IMR-90 (cell line): ENCODE measurements at regions of chr5 and their contacts with region 1.

Region 1: DNA sequence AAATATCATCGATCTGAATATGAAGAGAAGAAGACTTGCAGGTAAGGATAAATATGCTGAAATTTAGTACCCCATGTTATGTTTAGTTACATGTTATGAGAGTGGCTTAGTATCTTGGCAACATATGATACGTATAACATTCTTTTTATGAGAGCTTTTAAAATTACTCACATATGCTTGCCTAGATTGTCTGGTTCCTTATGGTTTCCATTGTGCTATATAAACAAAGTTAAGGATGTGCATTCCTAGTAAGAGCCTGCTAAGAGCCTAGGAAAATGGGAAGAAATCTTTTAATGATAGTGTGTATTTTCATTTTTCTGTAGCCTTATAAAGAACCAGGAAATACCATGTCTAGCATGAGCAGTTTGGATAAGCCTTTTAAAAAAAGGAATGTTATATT is 112.0 kb upstream of the KCNN2 start:
- DNase-seq: peak; percentile 94
- ATAC-seq: peak; percentile 83
- H3K4me3 ChIP-seq: no peak overlapping the region
- H3K27ac ChIP-seq: peak overlapping the region; percentile 95; the same call in 1 of the 2 replicates
- H3K4me1 ChIP-seq: peaks cover 16% of the 10 kb centered on the region
- H3K27me3 ChIP-seq: no peaks in the 10 kb centered on the region
- CTCF ChIP-seq: no peak
- POLR2A ChIP-seq: no peak
- RAD21 ChIP-seq: no peak

Region 2: DNA sequence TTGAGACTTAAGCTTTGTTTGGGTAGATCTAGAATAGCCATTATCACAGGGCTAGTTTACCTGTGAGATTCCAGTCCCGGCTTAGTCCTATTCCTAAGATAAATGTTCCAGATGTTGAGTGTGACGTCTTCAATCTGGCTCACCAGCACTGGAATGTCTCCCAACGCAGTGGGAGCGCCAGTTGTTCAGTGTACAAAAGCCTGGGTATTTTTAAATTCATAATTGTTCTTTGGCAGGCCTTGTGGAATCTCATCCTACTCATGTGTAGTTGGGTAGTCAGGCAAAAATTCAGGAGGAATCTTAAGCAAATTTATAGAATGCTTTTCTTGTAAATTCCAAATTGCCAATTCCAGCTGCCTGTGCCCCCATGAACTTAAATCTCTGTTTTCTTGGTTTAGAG is 160.6 kb before region 1 on chr5:
- CTCF ChIA-PET with region 1: no interaction called
- POLR2A ChIA-PET with region 1: interaction called, 18 read pairs
- dilution Hi-C with region 1: no loop called
- in situ Hi-C with region 1: no loop called
- intact Hi-C with region 1: no loop called
- DNase-seq: no peak
- ATAC-seq: no peak
- H3K4me3 ChIP-seq: no peak overlapping the region
- H3K27ac ChIP-seq: no peak overlapping the region
- H3K4me1 ChIP-seq: no peaks in the 10 kb centered on the region
- H3K27me3 ChIP-seq: no peaks in the 10 kb centered on the region
- CTCF ChIP-seq: no peak
- POLR2A ChIP-seq: no peak
- RAD21 ChIP-seq: no peak

Region 3: GRCh38 chr5:114101153-114101552 is 148.7 kb before region 1 on chr5:
- CTCF ChIA-PET with region 1: no interaction called
- POLR2A ChIA-PET with region 1: interaction called, 9 read pairs
- dilution Hi-C with region 1: no loop called
- in situ Hi-C with region 1: no loop called
- intact Hi-C with region 1: loop called (anchors 5 kb)
- DNase-seq: peak; percentile 80
- ATAC-seq: peak; percentile 91
- H3K4me3 ChIP-seq: no peak overlapping the region
- H3K27ac ChIP-seq: no peak overlapping the region
- H3K4me1 ChIP-seq: no peaks in the 10 kb centered on the region
- H3K27me3 ChIP-seq: no peaks in the 10 kb centered on the region
- CTCF ChIP-seq: peak; percentile 82
- POLR2A ChIP-seq: no peak
- RAD21 ChIP-seq: peak; percentile 85

Region 4: GRCh38 chr5:114305402-114306211 is 55.8 kb after region 1 on chr5:
- CTCF ChIA-PET with region 1: no interaction called
- POLR2A ChIA-PET with region 1: no interaction called
- dilution Hi-C with region 1: no loop called
- in situ Hi-C with region 1: no loop called
- intact Hi-C with region 1: loop called (anchors 5 kb)
- DNase-seq: peak; percentile 74
- ATAC-seq: peak; percentile 90
- H3K4me3 ChIP-seq: no peak overlapping the region
- H3K27ac ChIP-seq: peak overlapping the region; percentile 81
- H3K4me1 ChIP-seq: peaks cover 10% of the 10 kb centered on the region
- H3K27me3 ChIP-seq: no peaks in the 10 kb centered on the region
- CTCF ChIP-seq: peak; percentile 85
- POLR2A ChIP-seq: no peak
- RAD21 ChIP-seq: peak; percentile 84

Region 5: GRCh38 chr5:114418176-114419066 is 168.6 kb after region 1 on chr5:
- CTCF ChIA-PET with region 1: no interaction called
- POLR2A ChIA-PET with region 1: no interaction called
- dilution Hi-C with region 1: no loop called
- in situ Hi-C with region 1: no loop called
- intact Hi-C with region 1: loop called (anchors 10 kb)
- DNase-seq: no peak
- ATAC-seq: no peak
- H3K4me3 ChIP-seq: no peak overlapping the region
- H3K27ac ChIP-seq: no peak overlapping the region
- H3K4me1 ChIP-seq: peaks cover 9% of the 10 kb centered on the region
- H3K27me3 ChIP-seq: no peaks in the 10 kb centered on the region
- CTCF ChIP-seq: no peak
- POLR2A ChIP-seq: no peak
- RAD21 ChIP-seq: no peak